ENCODE measurements at regions of chr3 and their contacts with region 1.

Region 1: GRCh38 chr3:129439817-129440617 is at the starts of genes IFT122 and MBD4:
- DNase-seq: peak; percentile 94 to 99 (median 96)

Region 2: GRCh38 chr3:129278439-129278970 is 161.5 kb before region 1 on chr3 and contains the start of gene HMCES:
- intact Hi-C with region 1: no loop called
- DNase-seq: peak; percentile 84 to 99 (median 92)

Region 3: DNA sequence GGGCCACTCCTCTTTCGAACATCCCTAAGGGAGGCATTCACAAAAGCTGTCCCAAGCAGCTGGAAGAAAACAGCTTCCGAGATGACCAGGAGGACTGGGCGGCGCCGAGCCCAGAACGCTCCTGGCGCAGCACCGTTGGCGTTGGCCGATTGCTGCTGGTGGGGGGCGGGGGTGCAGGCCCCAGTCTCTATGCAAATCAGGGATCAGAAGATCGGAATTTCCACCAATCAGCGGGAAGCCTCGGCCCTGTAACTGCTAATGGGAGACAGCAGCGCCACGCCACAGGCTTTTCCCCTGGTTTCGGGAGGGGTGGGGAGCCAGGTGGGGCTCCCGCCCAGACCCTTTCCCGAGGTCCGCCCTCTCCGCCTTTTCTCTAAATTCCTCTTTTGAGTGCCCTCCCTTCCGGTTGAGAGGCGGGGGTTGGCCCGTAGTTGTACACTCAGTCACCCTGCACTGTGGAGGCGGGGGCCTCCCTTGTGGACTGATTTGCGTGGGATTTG is 134.4 kb before region 1 on chr3:
- intact Hi-C with region 1: no loop called
- DNase-seq: peak in 9 of 10 donors; percentile 46 to 91 (median 52)

Region 4: GRCh38 chr3:129399145-129399894 is 40.7 kb before region 1 on chr3:
- intact Hi-C with region 1: loop called (anchors 5 kb)
- DNase-seq: peak in 9 of 10 donors; percentile 67 to 95 (median 75)